Panc1 (cell line): ENCODE measurements at regions of chr6 and their contacts with region 1.

Region 1: DNA sequence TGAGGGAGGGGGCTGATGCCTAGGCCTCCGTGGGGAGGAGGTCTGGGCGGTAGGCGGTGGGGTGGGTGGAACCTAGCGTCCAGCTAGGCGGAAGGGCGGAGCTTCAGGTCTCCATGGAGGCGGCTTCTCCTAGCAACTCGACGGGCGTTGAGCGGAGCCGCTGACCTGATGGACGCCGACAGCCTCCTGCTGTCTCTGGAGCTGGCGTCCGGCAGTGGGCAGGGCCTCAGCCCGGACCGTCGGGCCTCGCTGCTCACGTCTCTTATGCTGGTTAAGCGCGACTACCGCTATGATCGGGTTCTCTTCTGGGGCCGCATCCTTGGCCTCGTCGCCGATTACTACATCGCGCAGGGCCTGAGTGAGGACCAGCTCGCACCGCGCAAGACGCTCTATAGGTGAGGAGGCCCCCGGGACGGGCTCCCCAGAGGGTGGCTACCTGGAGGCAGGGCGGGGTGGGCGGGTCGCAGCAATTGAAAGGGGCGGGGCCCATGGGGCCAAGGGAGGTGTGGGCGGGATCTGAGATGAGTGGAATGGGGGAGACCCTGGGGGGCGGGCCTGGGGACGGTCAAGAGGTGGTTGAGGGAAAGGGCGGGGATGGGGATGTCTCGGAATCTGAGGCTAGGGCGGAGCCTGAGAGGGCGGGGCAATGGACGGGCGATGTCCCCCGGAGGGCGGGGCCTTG is at the start of gene RSPH9:
- DNase-seq: no peak
- ATAC-seq: peak; percentile 84
- H3K4me3 ChIP-seq: peak within 1 kb of the TSS; percentile 42 to 54
- H3K27ac ChIP-seq: no peak within 1 kb of the TSS
- H3K4me1 ChIP-seq: peaks cover 2% of the 10 kb centered on the region; the same call in 1 of the 2 replicates
- H3K27me3 ChIP-seq: no peaks in the 10 kb centered on the region
- CTCF ChIP-seq: no peak
- total RNA-seq, gene RSPH9: 0.28 TPM

Region 2: GRCh38 chr6:43878823-43879495 is 233.9 kb after region 1 on chr6:
- CTCF ChIA-PET with region 1: no interaction called
- POLR2A ChIA-PET with region 1: interaction called, 11 read pairs
- in situ Hi-C with region 1: no loop called
- intact Hi-C with region 1: no loop called
- DNase-seq: no peak
- ATAC-seq: no peak
- H3K4me3 ChIP-seq: no peak overlapping the region
- H3K27ac ChIP-seq: no peak overlapping the region
- H3K4me1 ChIP-seq: no peaks in the 10 kb centered on the region
- H3K27me3 ChIP-seq: no peaks in the 10 kb centered on the region
- CTCF ChIP-seq: no peak

Region 3: GRCh38 chr6:44002593-44003344 is 357.7 kb after region 1 on chr6:
- CTCF ChIA-PET with region 1: no interaction called
- POLR2A ChIA-PET with region 1: no interaction called
- in situ Hi-C with region 1: no loop called
- intact Hi-C with region 1: no loop called
- DNase-seq: no peak
- ATAC-seq: no peak
- H3K4me3 ChIP-seq: no peak overlapping the region
- H3K27ac ChIP-seq: no peak overlapping the region
- H3K4me1 ChIP-seq: no peaks in the 10 kb centered on the region; the same call in 1 of the 2 replicates
- H3K27me3 ChIP-seq: no peaks in the 10 kb centered on the region
- CTCF ChIP-seq: no peak